ENCODE measurements at regions of chr1 and their contacts with region 1.

Region 1: GRCh38 chr1:110347182-110347893 is 8.2 kb downstream of the RBM15 start:
- DNase-seq: no peak
- H3K4me3 ChIP-seq: no peak overlapping the region
- H3K27ac ChIP-seq: peak overlapping the region; percentile 7
- H3K4me1 ChIP-seq: peaks cover 94% of the 10 kb centered on the region
- H3K27me3 ChIP-seq: no peaks in the 10 kb centered on the region
- CTCF ChIP-seq: no peak

Region 2: GRCh38 chr1:110403805-110404204 is 56.5 kb after region 1 on chr1:
- intact Hi-C with region 1: loop called (anchors 5 kb)
- DNase-seq: no peak
- H3K4me3 ChIP-seq: no peak overlapping the region
- H3K27ac ChIP-seq: no peak overlapping the region
- H3K4me1 ChIP-seq: peaks cover 40% of the 10 kb centered on the region
- H3K27me3 ChIP-seq: no peaks in the 10 kb centered on the region
- CTCF ChIP-seq: no peak